GM12878 (cell line): ENCODE measurements at regions of chr2 and their contacts with region 1.

Region 1: DNA sequence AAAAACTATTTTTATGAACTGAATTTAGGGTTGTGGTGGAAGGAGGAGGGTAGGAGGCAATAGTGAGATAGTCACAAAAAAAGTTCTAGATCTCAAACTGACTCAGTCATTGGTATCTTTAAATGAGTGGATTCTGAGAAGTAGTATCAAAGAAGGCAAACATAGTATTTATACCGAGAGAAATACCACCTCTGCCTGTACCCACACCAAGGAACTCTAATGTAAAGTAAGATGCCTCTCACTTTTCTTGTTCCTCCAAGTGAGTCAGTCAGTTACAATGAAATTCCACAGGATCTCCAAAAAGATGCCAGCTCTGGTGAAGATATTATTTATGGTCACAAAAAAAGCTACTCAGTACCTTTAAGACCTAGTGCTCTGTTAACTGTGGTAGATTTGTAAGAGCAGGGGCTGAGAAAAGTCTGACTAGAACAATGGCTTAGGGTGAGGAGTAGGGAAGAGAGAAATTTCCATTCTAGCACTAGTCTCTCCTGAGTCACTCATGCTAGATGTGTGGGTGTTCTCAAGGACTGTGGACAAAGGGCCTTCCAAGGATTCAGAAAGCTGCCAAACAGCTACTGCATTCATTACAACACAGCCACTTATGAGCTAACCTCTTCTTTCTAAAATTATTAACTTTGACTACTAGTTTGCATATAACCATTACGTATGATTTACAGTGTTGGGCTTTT is 36.3 kb downstream of the YWHAQ start:
- DNase-seq: no peak
- ATAC-seq: peak; percentile 72
- H3K4me3 ChIP-seq: no peak overlapping the region
- H3K27ac ChIP-seq: peak overlapping the region; percentile 28; the same call in 1 of the 2 replicates
- H3K4me1 ChIP-seq: peaks cover 11% of the 10 kb centered on the region; the same call in 1 of the 2 replicates
- H3K27me3 ChIP-seq: no peaks in the 10 kb centered on the region
- CTCF ChIP-seq: no peak
- EP300 ChIP-seq: no peak
- POLR2A ChIP-seq: no peak
- RAD21 ChIP-seq: no peak

Region 2: GRCh38 chr2:9613291-9613690 is 18.8 kb after region 1 on chr2:
- CTCF ChIA-PET with region 1: interaction called, 4 read pairs
- POLR2A ChIA-PET with region 1: interaction called, 8 read pairs
- RAD21 ChIA-PET with region 1: interaction called, 16 read pairs
- SMC1A ChIA-PET with region 1: interaction called, 9 read pairs
- in situ Hi-C with region 1: no loop called
- intact Hi-C with region 1: no loop called
- DNase-seq: no peak
- ATAC-seq: no peak
- H3K4me3 ChIP-seq: no peak overlapping the region
- H3K27ac ChIP-seq: no peak overlapping the region
- H3K4me1 ChIP-seq: peaks cover 6% of the 10 kb centered on the region; the same call in 1 of the 2 replicates
- H3K27me3 ChIP-seq: no peaks in the 10 kb centered on the region
- CTCF ChIP-seq: no peak
- EP300 ChIP-seq: no peak
- POLR2A ChIP-seq: no peak
- RAD21 ChIP-seq: no peak